ENCODE measurements at regions of chr2 and their contacts with region 1.

Region 1: DNA sequence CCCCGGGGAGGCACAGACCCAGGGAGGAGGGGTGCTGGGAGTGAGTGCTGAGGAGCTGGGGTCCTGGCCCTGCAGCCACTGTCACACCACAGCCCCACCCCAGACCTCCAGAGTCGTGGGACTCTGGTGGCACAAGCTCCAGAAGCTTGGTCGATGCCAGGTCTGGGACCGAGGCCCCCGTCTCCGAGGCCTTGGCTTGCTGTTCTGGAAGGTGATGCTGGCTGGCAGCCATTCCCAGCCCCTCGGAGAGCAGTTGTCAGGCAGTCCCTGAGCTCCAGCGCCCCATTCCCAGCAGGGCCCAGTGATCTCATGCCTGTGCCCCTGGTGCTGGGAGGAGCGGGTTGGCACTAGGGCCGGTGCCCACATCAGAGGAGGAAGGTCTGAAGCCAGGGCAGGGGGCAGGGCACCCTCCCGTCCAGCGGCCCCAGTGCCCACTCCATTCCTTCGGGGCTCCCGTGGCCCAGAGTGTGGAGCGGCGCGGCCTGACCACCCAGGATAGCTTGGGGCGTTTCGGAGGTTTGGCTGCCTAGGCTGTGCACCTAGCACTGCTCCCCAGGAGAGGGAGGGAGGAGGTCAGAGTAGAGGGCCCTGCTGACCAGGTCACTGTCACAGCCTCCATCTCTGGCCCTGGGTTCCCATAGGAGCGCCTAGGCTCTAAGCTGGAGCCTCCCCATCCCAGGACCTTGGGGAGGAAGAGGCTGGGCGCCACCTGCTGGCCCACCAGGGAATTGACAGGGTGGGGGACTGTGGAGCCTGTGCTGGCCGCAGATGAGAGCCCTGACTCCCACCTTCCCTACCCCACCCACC is 16.8 kb upstream of the ALPI start:
- DNase-seq: no peak
- H3K4me3 ChIP-seq: no peak overlapping the region
- H3K27ac ChIP-seq: no peak overlapping the region
- H3K4me1 ChIP-seq: no peaks in the 10 kb centered on the region
- H3K27me3 ChIP-seq: no peaks in the 10 kb centered on the region
- CTCF ChIP-seq: peak; percentile 17 to 48

Region 2: GRCh38 chr2:231854671-231855070 is 584.5 kb before region 1 on chr2:
- CTCF ChIA-PET with region 1: no interaction called
- dilution Hi-C with region 1: no loop called
- in situ Hi-C with region 1: no loop called
- intact Hi-C with region 1: loop called (anchors 1 kb)
- DNase-seq: peak; percentile 56
- H3K4me3 ChIP-seq: no peak overlapping the region
- H3K27ac ChIP-seq: no peak overlapping the region
- H3K4me1 ChIP-seq: peaks cover 2% of the 10 kb centered on the region
- H3K27me3 ChIP-seq: no peaks in the 10 kb centered on the region
- CTCF ChIP-seq: no peak

Region 3: DNA sequence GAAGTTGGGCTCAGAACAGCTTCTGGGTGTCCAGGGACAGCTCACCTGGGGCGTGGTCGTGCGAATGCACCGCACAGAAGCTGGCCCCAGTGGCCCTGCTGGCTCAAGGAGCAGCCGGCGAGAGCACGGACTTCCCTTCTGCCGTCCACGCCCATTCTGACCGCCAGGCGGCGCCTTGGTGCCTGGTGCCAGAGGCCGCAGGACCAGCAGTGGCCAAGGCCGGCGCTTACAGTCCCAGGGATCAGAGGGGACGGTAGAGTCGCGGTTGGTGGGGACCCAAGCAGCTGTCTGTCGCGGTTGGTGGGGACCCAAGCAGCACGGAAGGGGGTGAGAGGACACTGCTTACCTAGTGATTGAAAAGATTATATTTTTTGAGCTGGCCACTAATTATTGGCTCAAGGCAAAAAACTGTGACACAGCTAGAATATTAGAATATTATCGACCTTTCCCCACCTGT is 538.6 kb before region 1 on chr2:
- CTCF ChIA-PET with region 1: no interaction called
- dilution Hi-C with region 1: no loop called
- in situ Hi-C with region 1: loop called (anchors 5 to 10 kb)
- intact Hi-C with region 1: no loop called
- DNase-seq: peak; percentile 36
- H3K4me3 ChIP-seq: no peak overlapping the region
- H3K27ac ChIP-seq: no peak overlapping the region
- H3K4me1 ChIP-seq: no peaks in the 10 kb centered on the region
- H3K27me3 ChIP-seq: no peaks in the 10 kb centered on the region
- CTCF ChIP-seq: peak; percentile 57 to 69

Region 4: GRCh38 chr2:231925303-231926179 is 513.6 kb before region 1 on chr2:
- CTCF ChIA-PET with region 1: no interaction called
- dilution Hi-C with region 1: no loop called
- in situ Hi-C with region 1: no loop called
- intact Hi-C with region 1: loop called (anchors 1 kb)
- DNase-seq: peak; percentile 66
- H3K4me3 ChIP-seq: peak overlapping the region; percentile 32 to 53 (median 50)
- H3K27ac ChIP-seq: no peak overlapping the region
- H3K4me1 ChIP-seq: peaks cover 20% of the 10 kb centered on the region
- H3K27me3 ChIP-seq: peaks cover 13% of the 10 kb centered on the region
- CTCF ChIP-seq: peak; percentile 59 to 72

Region 5: DNA sequence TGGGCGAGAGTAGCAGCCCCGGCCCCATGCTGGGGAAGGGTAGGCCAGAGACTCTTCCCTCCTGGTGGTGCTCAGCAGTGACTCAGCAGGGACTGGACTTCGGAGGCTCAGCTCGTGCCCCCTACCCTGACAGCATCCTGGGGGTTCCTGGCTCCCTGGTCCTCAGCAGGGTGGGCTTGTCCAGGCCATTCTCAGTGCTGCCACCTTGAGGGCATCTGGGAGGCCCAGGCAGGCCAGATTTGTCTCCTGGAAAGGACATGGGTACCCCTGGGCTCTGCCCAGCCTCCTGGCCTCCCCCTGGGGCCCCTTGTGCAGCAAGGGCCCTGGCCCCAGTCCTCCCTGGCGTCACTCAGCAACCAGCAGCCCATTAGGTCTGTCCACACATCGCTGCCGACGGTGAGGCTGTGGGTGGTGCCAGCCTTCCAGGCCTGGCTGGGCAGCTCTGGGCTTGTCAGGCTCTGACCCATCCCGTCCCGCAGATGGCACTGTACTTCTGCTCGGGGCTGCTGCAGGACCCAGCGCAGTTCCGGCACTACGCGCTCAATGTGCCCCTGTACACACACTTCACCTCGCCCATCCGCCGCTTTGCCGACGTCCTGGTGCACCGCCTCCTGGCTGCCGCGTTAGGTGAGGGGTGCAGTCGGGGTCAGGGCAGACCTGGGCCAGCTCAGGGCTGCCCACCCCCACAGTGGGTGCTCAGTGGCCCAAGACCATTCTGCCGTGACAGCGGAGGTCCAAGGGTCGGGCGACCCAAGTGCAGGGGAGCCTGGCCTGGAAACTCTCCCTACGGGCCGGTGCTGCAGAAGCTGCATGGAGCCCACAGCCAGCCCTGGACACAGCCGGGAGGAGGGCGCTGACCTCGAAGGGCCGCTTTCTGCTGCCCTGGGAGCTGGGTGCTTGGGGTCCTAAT is 105.5 kb before region 1 on chr2:
- CTCF ChIA-PET with region 1: no interaction called
- dilution Hi-C with region 1: loop called (anchors 5 kb)
- in situ Hi-C with region 1: loop called in 1 of 2 experiments (anchors 25 kb)
- intact Hi-C with region 1: loop called (anchors 1 kb)
- DNase-seq: peak; percentile 73
- H3K4me3 ChIP-seq: no peak overlapping the region
- H3K27ac ChIP-seq: no peak overlapping the region
- H3K4me1 ChIP-seq: peaks cover 16% of the 10 kb centered on the region
- H3K27me3 ChIP-seq: no peaks in the 10 kb centered on the region
- CTCF ChIP-seq: peak; percentile 29 to 56

Region 6: DNA sequence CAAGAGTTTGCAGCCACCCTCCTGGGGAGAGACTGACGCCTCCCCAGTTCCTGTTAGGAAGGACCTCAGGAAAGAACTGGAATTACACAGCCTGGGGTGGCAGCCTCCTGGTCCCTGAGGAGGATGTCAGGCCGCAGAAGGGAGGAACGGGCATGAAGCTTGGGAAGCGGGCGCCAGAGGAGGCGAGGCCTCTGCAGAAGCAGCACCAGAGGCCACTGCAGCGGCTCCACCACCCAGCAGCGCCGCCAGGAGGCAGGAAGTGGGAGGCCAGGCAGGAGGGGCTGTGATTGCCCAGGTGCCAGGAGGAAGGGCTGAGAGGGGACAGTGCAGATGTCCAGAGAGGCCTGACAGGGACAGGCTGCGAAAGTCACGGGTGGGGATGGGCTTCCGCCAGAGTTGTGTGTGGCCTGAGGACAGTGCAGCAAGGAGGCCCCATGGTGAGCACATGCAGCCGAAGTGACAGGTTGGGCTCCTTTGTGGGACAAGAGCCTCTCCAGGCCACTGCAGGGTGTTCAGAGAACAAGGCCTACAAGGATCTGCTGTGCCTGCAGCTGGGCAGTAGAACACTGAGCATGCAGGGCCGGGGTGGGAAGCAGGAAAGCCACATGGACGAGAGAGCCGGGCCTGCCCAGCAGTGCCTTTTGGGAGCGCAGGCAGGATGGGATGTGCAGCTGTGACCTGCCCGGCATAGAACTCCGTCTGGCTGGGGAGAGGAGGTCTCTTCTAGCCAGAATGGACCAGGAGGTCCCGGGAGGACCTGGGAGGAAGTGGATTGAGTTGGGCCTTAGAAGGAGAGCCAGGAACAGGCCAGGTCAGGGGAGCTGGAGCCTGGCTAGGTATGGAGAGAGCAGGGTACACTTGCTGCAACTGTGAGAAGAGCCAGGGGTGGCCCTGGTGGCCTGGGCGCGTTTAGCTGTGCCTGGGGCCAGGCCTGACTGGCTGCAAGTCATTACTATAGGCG is 99.8 kb before region 1 on chr2:
- CTCF ChIA-PET with region 1: no interaction called
- dilution Hi-C with region 1: loop called (anchors 5 kb)
- in situ Hi-C with region 1: loop called in 1 of 2 experiments (anchors 25 kb)
- intact Hi-C with region 1: no loop called
- DNase-seq: no peak
- H3K4me3 ChIP-seq: no peak overlapping the region
- H3K27ac ChIP-seq: no peak overlapping the region
- H3K4me1 ChIP-seq: no peaks in the 10 kb centered on the region
- H3K27me3 ChIP-seq: no peaks in the 10 kb centered on the region
- CTCF ChIP-seq: no peak

Region 7: DNA sequence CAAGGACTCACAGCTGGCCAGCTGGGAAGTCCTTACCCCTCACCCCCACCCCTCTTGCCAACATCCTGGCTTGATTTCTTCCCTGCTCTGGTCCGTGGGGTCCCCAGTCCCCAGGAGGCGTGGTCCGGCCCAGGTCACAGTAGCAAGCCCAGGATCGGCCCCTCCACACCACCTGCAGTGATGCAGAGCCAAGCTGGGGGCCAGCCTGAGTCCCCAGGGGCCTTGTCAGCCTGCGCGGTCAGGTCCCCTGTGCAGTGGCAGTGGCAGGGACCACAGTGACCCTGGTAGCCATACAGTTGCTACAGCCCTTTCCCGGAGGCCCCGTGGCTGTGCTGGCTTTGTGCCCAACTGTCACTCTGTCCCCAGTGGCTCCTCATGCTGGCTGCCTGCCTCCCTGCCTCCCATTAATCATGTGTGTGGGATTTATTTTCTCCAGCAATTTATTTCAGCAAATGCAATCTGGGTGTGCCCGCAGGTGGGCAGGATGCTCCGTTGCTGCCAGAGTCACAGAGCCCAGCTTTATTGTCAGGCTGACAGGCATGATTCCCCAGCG is 72.3 kb after region 1 on chr2:
- CTCF ChIA-PET with region 1: no interaction called
- dilution Hi-C with region 1: loop called (anchors 5 kb)
- in situ Hi-C with region 1: no loop called
- intact Hi-C with region 1: no loop called
- DNase-seq: no peak
- H3K4me3 ChIP-seq: no peak overlapping the region
- H3K27ac ChIP-seq: no peak overlapping the region
- H3K4me1 ChIP-seq: no peaks in the 10 kb centered on the region
- H3K27me3 ChIP-seq: peaks cover 3% of the 10 kb centered on the region
- CTCF ChIP-seq: no peak

Region 8: GRCh38 chr2:232999354-232999753 is 560.2 kb after region 1 on chr2:
- CTCF ChIA-PET with region 1: no interaction called
- dilution Hi-C with region 1: no loop called
- in situ Hi-C with region 1: no loop called
- intact Hi-C with region 1: no loop called
- DNase-seq: no peak
- H3K4me3 ChIP-seq: no peak overlapping the region
- H3K27ac ChIP-seq: no peak overlapping the region
- H3K4me1 ChIP-seq: no peaks in the 10 kb centered on the region
- H3K27me3 ChIP-seq: peaks cover 3% of the 10 kb centered on the region
- CTCF ChIP-seq: no peak

Region 9: DNA sequence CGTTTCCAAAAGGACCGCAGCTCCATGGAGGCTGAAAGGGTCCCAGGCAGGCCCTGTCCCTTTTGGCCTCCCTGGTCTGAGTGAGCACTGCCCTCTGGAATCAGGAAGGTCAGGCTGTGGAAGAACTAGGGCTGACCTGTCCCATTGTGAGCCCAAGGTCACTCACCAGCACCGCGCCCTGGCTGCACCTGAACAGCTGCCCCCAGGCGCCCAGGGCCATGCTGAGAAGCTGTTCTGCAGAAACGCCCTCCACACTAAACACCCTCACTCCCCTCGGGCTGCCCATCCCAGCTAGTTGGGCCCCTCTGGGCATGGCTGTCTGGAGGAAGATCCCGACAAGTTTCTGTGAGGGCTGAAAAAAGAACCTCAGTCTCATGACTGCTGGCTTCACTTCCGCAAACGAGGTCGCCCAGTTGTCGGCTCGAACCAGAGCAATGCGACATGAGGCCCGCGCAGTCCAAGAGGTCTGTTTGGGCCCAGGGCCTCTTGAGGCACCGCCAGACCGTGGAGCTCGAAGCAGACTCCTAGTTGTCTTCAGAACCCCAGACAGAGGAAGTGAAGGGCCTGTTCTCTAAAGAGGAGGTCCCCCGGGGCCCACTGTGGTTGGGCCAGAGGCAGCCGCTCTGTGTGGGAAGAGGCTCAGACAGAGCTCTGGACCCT is 685.4 kb after region 1 on chr2:
- CTCF ChIA-PET with region 1: no interaction called
- dilution Hi-C with region 1: no loop called
- in situ Hi-C with region 1: no loop called
- intact Hi-C with region 1: no loop called
- DNase-seq: no peak
- H3K4me3 ChIP-seq: no peak overlapping the region
- H3K27ac ChIP-seq: no peak overlapping the region
- H3K4me1 ChIP-seq: no peaks in the 10 kb centered on the region
- H3K27me3 ChIP-seq: no peaks in the 10 kb centered on the region
- CTCF ChIP-seq: no peak

Measured in mammary epithelial cell (primary cell).